IMR-90 (cell line): ENCODE measurements at regions of chr5 and their contacts with region 1.

Region 1: GRCh38 chr5:133111299-133111698 is 59.5 kb downstream of the HSPA4 start:
- DNase-seq: peak; percentile 80
- ATAC-seq: peak; percentile 80
- H3K4me3 ChIP-seq: no peak overlapping the region
- H3K27ac ChIP-seq: no peak overlapping the region
- H3K4me1 ChIP-seq: peaks cover 5% of the 10 kb centered on the region; the same call in 1 of the 2 replicates
- H3K27me3 ChIP-seq: peaks cover 3% of the 10 kb centered on the region; the same call in 1 of the 2 replicates
- CTCF ChIP-seq: peak; percentile 97
- POLR2A ChIP-seq: peak; percentile 56
- RAD21 ChIP-seq: peak; percentile 99

Region 2: GRCh38 chr5:133260715-133261114 is 149.4 kb after region 1 on chr5:
- CTCF ChIA-PET with region 1: interaction called, 4 read pairs
- POLR2A ChIA-PET with region 1: no interaction called
- dilution Hi-C with region 1: no loop called
- in situ Hi-C with region 1: no loop called
- intact Hi-C with region 1: loop called (anchors 1 kb)
- DNase-seq: no peak
- ATAC-seq: 0 out of 2 replicates have a peak, but pooled peaks have one; percentile 24
- H3K4me3 ChIP-seq: no peak overlapping the region
- H3K27ac ChIP-seq: no peak overlapping the region
- H3K4me1 ChIP-seq: no peaks in the 10 kb centered on the region; the same call in 1 of the 2 replicates
- H3K27me3 ChIP-seq: peaks cover 49% of the 10 kb centered on the region
- CTCF ChIP-seq: peak; percentile 32
- POLR2A ChIP-seq: no peak
- RAD21 ChIP-seq: peak; percentile 52

Region 3: DNA sequence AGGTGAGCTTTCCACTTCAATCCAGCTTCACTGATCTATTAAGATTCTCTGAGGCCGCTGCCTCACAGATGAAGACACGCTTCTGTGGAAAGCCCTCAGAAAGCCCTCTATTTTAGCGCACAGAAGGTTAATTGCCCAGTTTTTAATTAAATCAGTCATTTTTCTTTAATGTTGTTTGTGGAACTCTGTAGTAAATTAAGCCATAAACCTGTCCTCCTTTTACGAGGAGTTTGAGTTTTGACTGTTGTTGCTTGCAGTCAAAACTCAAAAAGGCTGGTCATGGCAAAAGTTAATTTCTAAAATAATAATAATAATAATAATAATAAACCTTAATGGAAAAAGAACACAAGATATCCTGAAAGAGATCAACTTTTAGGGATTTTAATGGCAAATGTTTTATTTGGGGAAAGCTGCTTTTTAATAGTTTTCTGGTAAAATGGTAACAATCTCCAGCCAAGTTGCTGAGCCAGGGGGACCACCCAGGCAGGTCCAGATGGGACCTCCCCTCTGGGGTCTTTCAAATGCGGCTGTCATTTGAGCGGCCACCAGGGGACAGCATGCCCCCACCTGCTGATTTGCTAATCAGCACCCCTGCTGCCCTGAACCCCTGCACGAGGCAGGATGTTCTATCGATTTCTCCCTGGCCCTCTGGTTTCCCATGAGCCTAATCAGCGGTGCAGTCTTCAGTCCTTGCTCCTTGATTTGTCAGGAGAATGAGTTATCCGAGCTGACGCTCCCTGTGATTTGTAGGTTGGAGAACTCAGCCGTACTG is 253.8 kb after region 1 on chr5:
- CTCF ChIA-PET with region 1: no interaction called
- POLR2A ChIA-PET with region 1: no interaction called
- dilution Hi-C with region 1: no loop called
- in situ Hi-C with region 1: no loop called
- intact Hi-C with region 1: loop called (anchors 5 kb)
- DNase-seq: no peak
- ATAC-seq: no peak
- H3K4me3 ChIP-seq: no peak overlapping the region
- H3K27ac ChIP-seq: no peak overlapping the region
- H3K4me1 ChIP-seq: no peaks in the 10 kb centered on the region
- H3K27me3 ChIP-seq: peaks cover 22% of the 10 kb centered on the region
- CTCF ChIP-seq: 0 out of 2 replicates have a peak, but pooled peaks have one; percentile 3
- POLR2A ChIP-seq: no peak
- RAD21 ChIP-seq: no peak

Region 4: GRCh38 chr5:133404724-133405123 is 293.4 kb after region 1 on chr5:
- CTCF ChIA-PET with region 1: no interaction called
- POLR2A ChIA-PET with region 1: no interaction called
- dilution Hi-C with region 1: no loop called
- in situ Hi-C with region 1: no loop called
- intact Hi-C with region 1: no loop called
- DNase-seq: no peak
- ATAC-seq: no peak
- H3K4me3 ChIP-seq: no peak overlapping the region
- H3K27ac ChIP-seq: no peak overlapping the region
- H3K4me1 ChIP-seq: no peaks in the 10 kb centered on the region
- H3K27me3 ChIP-seq: peaks cover 12% of the 10 kb centered on the region
- CTCF ChIP-seq: no peak
- POLR2A ChIP-seq: no peak
- RAD21 ChIP-seq: no peak

Region 5: DNA sequence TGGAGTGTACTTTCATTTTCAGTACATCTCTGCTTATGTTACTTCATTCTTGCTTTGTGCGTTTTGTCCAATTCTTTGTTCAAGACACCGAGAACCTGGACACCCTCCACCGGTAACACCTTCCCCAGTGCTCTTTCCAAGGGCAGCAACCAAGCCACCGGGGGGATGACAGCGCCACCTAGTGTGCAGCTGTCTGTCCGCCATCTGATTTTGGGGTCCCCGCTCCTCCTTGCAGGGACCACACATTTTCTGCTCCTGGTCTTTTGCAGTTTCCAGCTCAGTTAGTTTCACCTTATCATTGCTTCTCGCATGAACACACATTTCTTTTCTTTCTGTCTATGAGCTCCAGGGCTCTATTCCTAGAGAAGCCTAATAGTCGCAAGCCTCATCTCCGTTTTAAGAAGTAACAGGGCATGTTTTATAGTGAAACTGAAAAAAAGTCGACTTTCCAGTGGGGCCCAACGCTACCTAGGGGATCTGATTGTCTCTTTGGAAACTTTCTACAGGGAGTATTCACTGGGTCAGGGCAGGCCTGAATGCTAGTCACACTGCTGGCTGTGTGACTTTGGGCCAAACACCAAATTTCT is 349.0 kb after region 1 on chr5:
- CTCF ChIA-PET with region 1: no interaction called
- POLR2A ChIA-PET with region 1: no interaction called
- dilution Hi-C with region 1: no loop called
- in situ Hi-C with region 1: no loop called
- intact Hi-C with region 1: loop called (anchors 1 kb)
- DNase-seq: no peak
- ATAC-seq: no peak
- H3K4me3 ChIP-seq: no peak overlapping the region
- H3K27ac ChIP-seq: no peak overlapping the region
- H3K4me1 ChIP-seq: no peaks in the 10 kb centered on the region
- H3K27me3 ChIP-seq: peaks cover 2% of the 10 kb centered on the region; the same call in 1 of the 2 replicates
- CTCF ChIP-seq: peak; percentile 40
- POLR2A ChIP-seq: no peak
- RAD21 ChIP-seq: peak; percentile 43

Region 6: GRCh38 chr5:133610489-133611356 is 499.4 kb after region 1 on chr5:
- CTCF ChIA-PET with region 1: no interaction called
- POLR2A ChIA-PET with region 1: no interaction called
- dilution Hi-C with region 1: no loop called
- in situ Hi-C with region 1: no loop called
- intact Hi-C with region 1: loop called (anchors 5 kb)
- DNase-seq: no peak
- ATAC-seq: peak; percentile 90
- H3K4me3 ChIP-seq: no peak overlapping the region
- H3K27ac ChIP-seq: no peak overlapping the region
- H3K4me1 ChIP-seq: peaks cover 3% of the 10 kb centered on the region; the same call in 1 of the 2 replicates
- H3K27me3 ChIP-seq: peaks cover 40% of the 10 kb centered on the region
- CTCF ChIP-seq: no peak; the same call in 1 of the 2 replicates
- POLR2A ChIP-seq: no peak
- RAD21 ChIP-seq: no peak

Region 7: GRCh38 chr5:133635051-133635450 is 523.8 kb after region 1 on chr5:
- CTCF ChIA-PET with region 1: no interaction called
- POLR2A ChIA-PET with region 1: no interaction called
- dilution Hi-C with region 1: no loop called
- in situ Hi-C with region 1: no loop called
- intact Hi-C with region 1: no loop called
- DNase-seq: peak; percentile 28
- ATAC-seq: peak; percentile 51; the same call in 1 of the 2 replicates
- H3K4me3 ChIP-seq: no peak overlapping the region
- H3K27ac ChIP-seq: no peak overlapping the region
- H3K4me1 ChIP-seq: no peaks in the 10 kb centered on the region
- H3K27me3 ChIP-seq: no peaks in the 10 kb centered on the region
- CTCF ChIP-seq: no peak
- POLR2A ChIP-seq: no peak
- RAD21 ChIP-seq: no peak

Region 8: GRCh38 chr5:133868946-133869518 is 757.7 kb after region 1 on chr5:
- CTCF ChIA-PET with region 1: interaction called, 3 read pairs
- POLR2A ChIA-PET with region 1: no interaction called
- dilution Hi-C with region 1: no loop called
- in situ Hi-C with region 1: no loop called
- intact Hi-C with region 1: loop called (anchors 1 kb)
- DNase-seq: peak; percentile 73
- ATAC-seq: peak; percentile 71
- H3K4me3 ChIP-seq: no peak overlapping the region
- H3K27ac ChIP-seq: no peak overlapping the region
- H3K4me1 ChIP-seq: no peaks in the 10 kb centered on the region
- H3K27me3 ChIP-seq: peaks cover 23% of the 10 kb centered on the region; the same call in 1 of the 2 replicates
- CTCF ChIP-seq: peak; percentile 88
- POLR2A ChIP-seq: no peak
- RAD21 ChIP-seq: peak; percentile 72